Posterior vena cava (tissue), 2 donors: ENCODE measurements at regions of chr19 and their contacts with region 1.

Region 1: DNA sequence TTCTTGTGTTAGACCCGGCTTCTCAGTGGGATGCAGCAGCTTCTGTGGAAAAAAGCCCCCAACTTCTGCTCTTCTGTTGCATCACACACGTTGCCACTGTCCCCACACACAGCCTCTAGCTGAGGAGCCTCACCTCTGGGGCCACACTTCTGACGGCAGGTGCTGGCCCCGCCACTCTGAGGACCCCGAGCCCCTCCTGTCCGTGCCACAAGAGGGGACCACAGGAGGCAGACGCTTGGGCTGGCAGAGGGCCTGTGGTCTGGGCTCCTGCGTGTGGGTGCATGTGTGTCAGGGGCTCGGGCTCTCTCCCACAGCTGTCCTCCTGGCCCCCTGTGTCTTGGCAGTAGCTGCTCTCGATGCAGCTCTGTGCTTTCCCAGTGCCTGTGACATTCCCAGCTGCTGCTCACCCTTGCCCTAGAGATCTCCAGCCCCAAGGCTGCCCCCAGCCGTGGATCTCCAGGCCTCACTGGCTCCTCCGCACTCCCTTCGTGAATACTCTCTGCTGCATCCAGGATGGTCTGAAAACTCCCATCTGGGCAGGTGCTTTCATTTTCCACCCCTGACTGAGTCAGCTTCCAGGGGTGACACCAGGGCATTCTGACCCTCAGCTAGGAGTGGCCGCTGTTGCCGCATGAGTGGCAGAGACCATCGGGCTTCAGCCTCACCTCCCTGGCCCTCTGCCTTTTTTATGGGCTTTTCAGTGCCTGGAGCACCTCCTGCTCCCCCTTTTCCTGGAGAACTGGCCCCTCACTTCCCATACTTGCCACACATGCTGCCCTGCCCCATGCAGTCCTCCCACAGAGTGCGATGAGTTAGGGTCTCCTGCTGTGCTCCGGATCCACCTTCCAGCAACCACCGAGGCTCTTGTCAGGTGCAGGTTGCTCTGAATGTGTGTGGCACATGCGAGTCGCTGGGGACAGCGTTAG is 13.7 kb downstream of the MAU2 start:
- DNase-seq: no peak

Region 2: DNA sequence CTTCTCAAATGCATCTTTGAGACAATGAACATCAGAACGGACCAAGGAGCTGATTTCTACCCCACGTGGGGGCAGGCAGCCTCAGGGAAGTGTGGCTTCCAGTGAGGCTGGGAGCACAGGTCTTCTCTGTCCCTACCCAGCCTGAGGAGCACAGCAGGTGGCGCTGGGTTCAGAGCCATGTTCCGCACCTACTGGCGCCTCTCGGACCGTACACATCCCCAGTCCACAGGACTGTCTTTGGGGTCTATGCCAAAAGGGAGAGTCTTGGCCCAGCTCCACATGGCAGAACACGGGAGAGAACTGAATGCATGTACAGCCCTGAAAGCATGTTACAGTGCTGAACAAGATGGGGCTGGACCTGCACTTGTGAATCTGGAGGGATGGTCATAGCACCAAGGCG is 36.6 kb before region 1 on chr19:
- intact Hi-C with region 1: no loop called
- DNase-seq: no peak

Region 3: DNA sequence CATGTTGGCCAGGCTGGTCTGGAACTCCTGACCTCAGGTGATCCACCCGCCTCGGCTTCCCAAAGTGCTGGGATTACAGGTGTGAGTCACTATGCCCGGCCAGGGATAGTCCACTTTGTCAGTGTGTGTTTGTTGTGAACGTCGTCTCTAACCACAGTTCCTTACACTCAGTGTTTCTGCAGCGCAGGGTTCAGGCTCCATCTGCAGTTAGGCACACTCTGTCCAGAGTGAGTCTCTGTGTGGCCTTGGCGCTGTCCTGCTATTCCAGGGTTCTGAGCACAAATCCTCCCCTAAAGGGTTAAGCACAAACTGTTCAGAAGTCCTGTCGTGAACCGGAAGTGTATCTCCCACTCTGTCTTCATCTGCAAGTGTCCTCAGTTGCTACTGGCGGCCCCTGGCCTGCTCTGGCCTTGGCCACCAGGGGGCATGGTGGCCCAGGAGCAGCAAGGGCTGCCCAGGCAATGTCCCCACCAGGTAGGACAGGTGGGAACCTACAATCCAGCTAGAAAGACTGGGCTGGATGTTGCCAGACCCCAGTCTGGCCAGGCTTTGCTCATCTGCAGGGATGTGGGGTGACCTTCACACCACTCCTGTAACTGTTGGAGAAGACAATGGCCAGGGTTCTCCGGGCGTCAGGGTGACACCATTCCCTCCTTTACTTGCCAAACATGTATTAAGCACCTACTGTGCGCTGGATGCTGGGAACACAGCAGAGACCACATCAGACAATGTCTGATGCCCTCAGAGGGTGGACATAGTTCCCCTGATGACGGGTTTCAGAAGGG is 32.5 kb after region 1 on chr19:
- intact Hi-C with region 1: loop called in 1 of 2 experiments (anchors 1 kb)
- DNase-seq: no peak

Region 4: DNA sequence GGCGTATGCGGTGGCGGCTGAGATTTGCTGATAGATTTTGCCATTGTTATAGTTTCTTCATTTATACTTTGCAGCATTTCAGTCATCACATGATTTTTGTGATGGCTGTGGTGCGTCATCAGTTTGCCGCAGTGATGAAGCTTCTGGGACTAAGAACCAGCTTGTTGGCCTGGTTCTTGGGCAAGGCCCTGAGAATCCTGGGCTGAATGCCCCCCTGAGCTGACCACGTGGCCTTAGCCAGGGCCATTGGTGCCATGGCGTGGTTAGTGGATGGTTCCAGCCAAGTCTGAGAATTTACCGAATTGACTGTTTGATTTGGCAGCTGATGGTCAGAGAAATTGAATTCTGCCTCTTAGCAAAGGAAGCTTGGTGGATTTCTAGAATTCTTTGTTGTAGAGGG is 89.0 kb after region 1 on chr19:
- intact Hi-C with region 1: no loop called
- DNase-seq: no peak